Activated CD4-positive, alpha-beta T cell treated with anti-CD3 and anti-CD28 coated beads for 36 hours (primary cell): ENCODE measurements at regions of chr19 and their contacts with region 1.

Region 1: GRCh38 chr19:57171551-57172081 is 4.3 kb upstream of the DUXA start:
- DNase-seq: peak; percentile 39
- ATAC-seq: peak; percentile 60
- H3K4me3 Mint-ChIP-seq: peak overlapping the region; percentile 41
- H3K27ac Mint-ChIP-seq: no peak overlapping the region
- H3K4me1 Mint-ChIP-seq: peaks cover 10% of the 10 kb centered on the region
- H3K27me3 Mint-ChIP-seq: peaks cover 19% of the 10 kb centered on the region

Region 2: DNA sequence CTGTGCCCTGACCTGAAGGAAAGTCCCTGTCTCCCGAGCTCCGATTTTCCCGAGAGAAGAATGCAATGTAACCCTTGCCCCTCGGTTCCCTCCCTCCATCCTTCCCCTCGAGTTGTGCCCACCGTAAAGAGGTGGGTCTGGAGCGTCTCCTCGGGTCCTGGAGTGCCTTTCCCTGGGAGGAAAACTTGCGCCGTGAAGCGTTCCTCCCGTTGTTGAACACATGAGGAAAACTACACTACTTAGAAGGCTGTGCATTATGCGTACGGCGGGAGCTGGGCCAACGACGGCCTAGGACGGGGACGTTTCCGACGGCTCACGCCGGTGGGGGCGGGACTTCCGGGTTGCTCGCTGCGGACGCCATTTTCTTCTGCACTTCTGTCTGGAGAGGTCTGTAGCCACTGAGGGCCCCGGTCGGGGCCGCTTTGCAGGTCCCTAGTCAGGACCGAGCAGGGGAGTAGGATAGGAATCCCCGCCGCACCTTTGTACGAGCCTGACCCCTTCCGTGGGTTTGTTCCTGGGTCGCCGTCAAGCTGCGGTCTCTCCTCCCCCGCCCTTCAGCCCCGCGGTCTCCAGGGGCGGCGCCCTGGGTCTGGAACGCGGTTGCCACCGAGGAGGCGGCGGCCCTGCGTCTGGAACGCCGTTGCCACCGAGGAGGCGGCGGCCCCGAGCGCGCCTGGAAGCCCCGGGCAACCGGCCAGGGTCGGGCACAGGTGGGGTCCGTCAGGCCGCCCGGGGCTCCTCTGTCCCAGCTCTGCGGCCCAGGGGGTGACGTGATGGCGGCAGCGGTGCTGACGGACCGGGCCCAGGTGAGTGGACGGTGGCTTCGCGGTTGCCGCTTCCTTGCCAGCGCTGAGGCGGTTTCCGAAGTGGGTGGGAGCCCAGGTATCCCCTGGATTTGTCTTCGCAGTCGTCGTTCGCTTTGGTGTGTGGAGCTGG is 19.8 kb after region 1 on chr19 and contains the start of gene ZNF264:
- CTCF ChIA-PET with region 1: no interaction called
- POLR2A ChIA-PET with region 1: no interaction called
- intact Hi-C with region 1: loop called in 1 of 2 experiments (anchors 1 kb)
- DNase-seq: peak; percentile 93
- ATAC-seq: peak; percentile 96
- H3K4me3 Mint-ChIP-seq: peak within 1 kb of the TSS; percentile 93
- H3K27ac Mint-ChIP-seq: peak within 1 kb of the TSS; percentile 95
- H3K4me1 Mint-ChIP-seq: peaks cover 28% of the 10 kb centered on the region
- H3K27me3 Mint-ChIP-seq: peaks cover 4% of the 10 kb centered on the region
- total RNA-seq, gene ZNF264: 14.8 to 21.1 TPM